HCT116 (cell line): ENCODE measurements at regions of chr12 and their contacts with region 1.

Region 1: DNA sequence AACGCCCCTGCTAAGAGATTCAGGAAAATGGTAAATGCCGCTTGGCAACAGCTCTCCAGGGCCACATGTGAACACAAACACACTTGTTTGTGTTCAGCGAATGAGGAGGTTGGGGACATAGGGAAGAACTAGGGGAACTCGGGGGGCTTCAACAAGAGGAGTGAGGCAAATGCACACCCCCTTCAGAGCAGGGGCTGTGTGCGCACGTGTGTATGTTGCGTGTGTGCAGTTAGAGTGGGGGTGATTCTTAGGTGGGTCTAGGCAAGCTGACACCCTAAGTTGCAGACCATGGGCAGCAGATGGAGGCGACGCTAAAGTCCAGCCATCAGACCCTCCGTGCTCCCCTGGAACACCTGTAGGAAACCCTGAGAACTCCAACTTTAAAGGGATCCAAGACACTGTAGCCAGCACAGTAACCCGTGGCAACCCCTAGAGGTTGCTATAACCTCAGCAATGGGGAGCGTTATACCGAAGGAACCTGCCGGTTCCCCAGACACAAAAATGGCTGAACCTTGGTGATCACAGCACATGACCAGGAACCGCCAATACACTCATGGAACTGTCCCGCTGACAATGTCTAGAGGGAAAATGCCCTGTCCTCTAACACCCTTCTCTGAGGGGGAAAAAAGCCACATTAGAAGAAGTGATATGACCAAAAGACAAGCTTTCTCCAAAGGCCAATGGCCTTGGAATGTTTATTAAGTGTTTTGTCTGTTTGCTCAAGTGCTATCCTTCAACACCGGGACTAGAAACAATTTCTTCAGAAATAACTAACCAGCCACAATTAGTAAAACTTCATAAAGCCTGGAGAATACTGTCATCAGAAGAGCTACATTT is 86.5 kb upstream of the CEP83 start:
- DNase-seq: peak; percentile 77
- ATAC-seq: peak; percentile 98
- H3K4me3 ChIP-seq: no peak overlapping the region
- H3K27ac ChIP-seq: no peak overlapping the region
- H3K4me1 ChIP-seq: no peaks in the 10 kb centered on the region
- H3K27me3 ChIP-seq: no peaks in the 10 kb centered on the region
- CTCF ChIP-seq: peak; percentile 72 to 88 (median 87); a peak in 5 of 6 replicates
- POLR2A ChIP-seq: no peak
- RAD21 ChIP-seq: peak; percentile 99

Region 2: DNA sequence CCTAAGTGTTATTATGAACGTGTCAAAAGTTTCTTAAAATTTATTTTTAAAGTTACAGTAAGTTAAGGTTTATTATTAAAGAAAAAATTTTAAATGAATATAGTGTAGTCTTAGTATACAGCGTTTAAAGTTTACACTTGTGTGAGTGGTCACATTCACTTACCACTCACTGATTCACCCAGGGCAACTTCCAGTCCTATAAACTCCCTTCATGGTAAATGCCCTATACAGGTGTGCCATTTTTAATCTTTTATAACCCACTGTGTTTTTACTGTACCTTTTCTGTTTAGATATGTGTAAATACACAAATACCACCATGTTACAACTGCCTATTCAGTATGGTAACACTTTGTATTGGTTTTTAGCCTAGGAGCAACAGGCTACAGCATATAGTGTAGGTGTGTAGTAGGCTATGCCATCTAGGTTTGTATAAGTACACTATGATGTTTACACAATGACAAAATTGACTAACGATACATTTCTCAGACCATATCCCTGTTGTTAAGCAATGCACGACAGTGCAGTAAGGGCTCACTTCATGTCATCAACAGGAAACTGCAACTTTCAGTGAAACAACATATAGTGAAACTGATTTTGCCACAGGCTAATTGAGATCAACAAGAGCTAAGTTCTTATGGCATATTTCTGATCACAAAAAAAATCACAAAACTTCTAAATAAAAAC is 216.2 kb after region 1 on chr12:
- CTCF ChIA-PET with region 1: no interaction called
- POLR2A ChIA-PET with region 1: no interaction called
- RAD21 ChIA-PET with region 1: no interaction called
- intact Hi-C with region 1: loop called (anchors 1 kb)
- DNase-seq: no peak
- ATAC-seq: no peak
- H3K4me3 ChIP-seq: no peak overlapping the region
- H3K27ac ChIP-seq: no peak overlapping the region
- H3K4me1 ChIP-seq: peaks cover 0 to 9% of the 10 kb centered on the region in 2 experiments; a peak in 2 of 4 replicates
- H3K27me3 ChIP-seq: no peaks in the 10 kb centered on the region
- CTCF ChIP-seq: no peak
- POLR2A ChIP-seq: no peak
- RAD21 ChIP-seq: no peak

Region 3: DNA sequence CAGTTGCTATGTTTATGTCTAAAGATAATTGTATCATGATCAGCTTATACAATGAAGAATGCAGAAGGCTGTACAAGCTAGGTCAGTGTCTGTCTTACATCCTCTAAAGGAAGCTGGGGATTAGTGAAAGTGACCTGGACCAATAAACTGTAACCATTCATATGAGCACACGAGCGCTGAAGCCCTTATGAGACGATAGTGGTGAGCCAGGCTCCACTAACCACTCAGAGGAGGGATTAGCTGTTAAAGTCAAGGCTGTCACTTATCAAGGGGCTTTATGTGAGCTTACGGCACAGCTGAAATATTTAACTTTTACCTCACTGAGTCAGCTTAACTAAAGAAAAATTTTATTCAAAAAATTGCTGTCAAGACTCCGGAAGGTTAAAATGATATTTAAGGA is 427.1 kb after region 1 on chr12:
- CTCF ChIA-PET with region 1: no interaction called
- POLR2A ChIA-PET with region 1: no interaction called
- RAD21 ChIA-PET with region 1: no interaction called
- intact Hi-C with region 1: loop called (anchors 10 kb)
- DNase-seq: no peak
- ATAC-seq: no peak
- H3K4me3 ChIP-seq: no peak overlapping the region
- H3K27ac ChIP-seq: no peak overlapping the region
- H3K4me1 ChIP-seq: no peaks in the 10 kb centered on the region
- H3K27me3 ChIP-seq: no peaks in the 10 kb centered on the region
- CTCF ChIP-seq: no peak
- POLR2A ChIP-seq: no peak
- RAD21 ChIP-seq: no peak

Region 4: DNA sequence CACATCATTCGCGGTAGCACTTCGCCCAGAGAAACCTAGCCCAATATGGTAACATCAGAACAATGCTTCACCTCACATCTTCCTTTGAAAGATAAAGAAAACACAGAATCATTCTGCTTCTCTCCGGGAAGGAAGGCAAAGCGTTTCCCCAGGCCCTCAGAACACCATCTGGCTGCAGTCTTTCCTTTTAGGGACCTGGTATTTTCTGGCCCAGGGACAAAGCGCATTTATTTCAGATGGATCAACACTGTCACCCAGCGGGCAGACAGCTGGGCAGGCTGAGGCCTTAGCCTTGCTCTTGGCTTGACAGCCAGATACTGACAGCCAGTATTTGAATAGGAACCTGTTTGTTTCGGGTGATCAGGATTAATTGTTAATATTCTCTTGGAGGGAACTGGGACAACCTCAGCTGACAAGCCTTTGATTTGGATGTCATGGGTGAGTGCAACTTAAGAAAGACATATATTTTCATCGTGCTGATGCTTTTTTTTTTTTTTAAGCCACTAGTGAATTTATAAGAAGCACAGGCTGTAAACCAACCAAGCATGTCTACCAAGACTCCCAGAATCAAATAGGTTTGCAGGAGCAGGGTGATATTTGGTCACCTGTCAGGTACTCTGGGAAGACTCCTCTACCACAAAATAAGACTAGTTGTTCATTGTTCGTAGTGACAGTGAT is 790.4 kb after region 1 on chr12:
- CTCF ChIA-PET with region 1: interaction called, 3 read pairs
- POLR2A ChIA-PET with region 1: no interaction called
- RAD21 ChIA-PET with region 1: no interaction called
- intact Hi-C with region 1: loop called (anchors 1 kb)
- DNase-seq: peak; percentile 65
- ATAC-seq: peak; percentile 57
- H3K4me3 ChIP-seq: no peak overlapping the region
- H3K27ac ChIP-seq: no peak overlapping the region
- H3K4me1 ChIP-seq: peaks cover 16 to 59% of the 10 kb centered on the region in 2 experiments
- H3K27me3 ChIP-seq: no peaks in the 10 kb centered on the region
- CTCF ChIP-seq: peak; percentile 82 to 91 (median 83)
- POLR2A ChIP-seq: no peak
- RAD21 ChIP-seq: peak; percentile 97

Region 5: GRCh38 chr12:95574799-95575452 is 1028.8 kb after region 1 on chr12:
- CTCF ChIA-PET with region 1: interaction called, 4 read pairs
- POLR2A ChIA-PET with region 1: no interaction called
- RAD21 ChIA-PET with region 1: no interaction called
- intact Hi-C with region 1: loop called (anchors 10 kb)
- DNase-seq: peak; percentile 49
- ATAC-seq: peak; percentile 83
- H3K4me3 ChIP-seq: no peak overlapping the region
- H3K27ac ChIP-seq: no peak overlapping the region
- H3K4me1 ChIP-seq: peaks cover 0 to 4% of the 10 kb centered on the region in 2 experiments; a peak in 1 of 4 replicates
- H3K27me3 ChIP-seq: no peaks in the 10 kb centered on the region
- CTCF ChIP-seq: peak; percentile 68 to 79 (median 70)
- POLR2A ChIP-seq: no peak
- RAD21 ChIP-seq: peak; percentile 78